Panc1 (cell line): ENCODE measurements at regions of chr11 and their contacts with region 1.

Region 1: GRCh38 chr11:36265793-36266628 is 23.2 kb downstream of the COMMD9 start:
- DNase-seq: no peak
- ATAC-seq: peak; percentile 87
- H3K4me3 ChIP-seq: no peak overlapping the region
- H3K27ac ChIP-seq: no peak overlapping the region
- H3K4me1 ChIP-seq: no peaks in the 10 kb centered on the region
- H3K27me3 ChIP-seq: no peaks in the 10 kb centered on the region
- CTCF ChIP-seq: peak; percentile 90

Region 2: DNA sequence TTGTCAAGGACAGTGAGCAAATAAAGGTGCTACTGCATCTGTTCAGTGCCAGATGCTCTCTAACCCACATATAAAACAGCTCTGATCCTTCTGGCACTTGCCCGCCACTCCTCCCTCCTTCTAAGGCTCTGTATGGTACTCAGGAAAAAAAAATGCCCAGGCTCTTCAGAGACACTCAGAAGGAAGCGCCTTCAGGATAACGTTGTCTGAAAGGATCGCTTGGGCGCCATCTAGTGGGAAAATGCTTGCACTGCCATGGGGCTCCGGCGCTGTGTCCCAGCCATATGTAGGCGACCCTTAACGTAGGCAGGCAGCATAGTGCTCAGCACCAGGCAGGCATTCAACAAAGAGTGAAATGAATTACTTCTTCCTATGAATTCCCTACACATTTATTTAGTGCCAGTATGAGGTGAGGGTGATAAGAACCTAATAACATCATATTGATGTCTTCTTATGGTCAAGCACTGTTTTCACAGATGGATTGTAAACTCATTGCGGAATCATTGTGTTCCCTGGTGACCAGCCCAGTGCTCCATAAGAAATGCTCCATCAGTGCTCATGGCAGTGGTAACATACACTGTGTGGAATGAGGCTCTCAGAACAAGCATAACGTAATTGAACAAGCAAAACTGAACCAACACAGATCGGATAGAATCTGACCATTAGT is 780.2 kb before region 1 on chr11:
- CTCF ChIA-PET with region 1: no interaction called
- POLR2A ChIA-PET with region 1: no interaction called
- in situ Hi-C with region 1: no loop called
- intact Hi-C with region 1: loop called (anchors 5 kb)
- DNase-seq: peak; percentile 48
- ATAC-seq: peak; percentile 99
- H3K4me3 ChIP-seq: no peak overlapping the region
- H3K27ac ChIP-seq: no peak overlapping the region
- H3K4me1 ChIP-seq: no peaks in the 10 kb centered on the region
- H3K27me3 ChIP-seq: peaks cover 19% of the 10 kb centered on the region
- CTCF ChIP-seq: peak; percentile 96

Region 3: DNA sequence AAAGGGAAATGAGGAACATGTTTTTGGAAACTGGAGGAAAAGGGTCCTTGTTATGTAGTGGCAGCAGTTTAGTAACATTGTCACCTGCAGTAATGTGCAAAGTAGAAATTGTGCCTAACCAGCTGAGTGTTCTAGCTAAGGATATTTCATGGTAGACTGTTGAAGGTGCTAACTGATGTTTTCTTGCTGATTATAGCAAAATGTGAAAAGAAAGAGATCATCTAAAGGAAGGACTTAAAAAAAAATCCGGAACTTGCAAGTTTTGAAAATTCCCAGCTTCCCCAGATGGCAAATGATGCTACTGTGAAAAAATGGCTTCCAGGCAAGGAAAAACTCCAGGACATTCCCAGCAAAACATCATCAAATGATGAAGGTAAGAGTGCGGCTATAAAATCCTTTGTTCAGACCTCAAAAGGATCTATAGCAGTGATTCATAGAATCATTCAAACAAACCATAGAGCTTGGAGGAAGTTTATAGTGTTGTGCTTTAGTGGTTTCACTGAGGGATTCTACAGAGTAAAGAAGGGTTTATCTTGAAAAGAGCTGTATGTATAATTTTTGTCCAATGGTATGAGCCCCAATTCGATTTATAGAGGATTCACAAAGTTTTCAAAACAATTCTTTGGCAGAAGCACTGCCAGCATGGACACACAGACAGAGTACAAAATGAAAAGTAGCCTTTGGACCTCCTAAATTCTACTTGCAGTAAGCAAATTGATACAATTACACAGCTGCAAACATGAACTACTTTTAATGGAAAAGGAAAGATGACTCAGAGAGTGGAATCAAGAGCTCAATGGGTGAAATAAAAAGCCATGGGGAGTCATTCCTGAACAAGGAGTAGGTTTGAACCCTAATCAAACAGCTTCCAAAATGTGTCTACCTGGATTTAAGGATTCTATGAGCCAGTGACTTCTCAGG is 607.7 kb before region 1 on chr11:
- CTCF ChIA-PET with region 1: no interaction called
- POLR2A ChIA-PET with region 1: no interaction called
- in situ Hi-C with region 1: no loop called
- intact Hi-C with region 1: no loop called
- DNase-seq: no peak
- ATAC-seq: no peak
- H3K4me3 ChIP-seq: no peak overlapping the region
- H3K27ac ChIP-seq: no peak overlapping the region
- H3K4me1 ChIP-seq: peaks cover 8% of the 10 kb centered on the region
- H3K27me3 ChIP-seq: no peaks in the 10 kb centered on the region
- CTCF ChIP-seq: no peak

Region 4: GRCh38 chr11:36235750-36236149 is 30.3 kb before region 1 on chr11:
- CTCF ChIA-PET with region 1: no interaction called
- POLR2A ChIA-PET with region 1: no interaction called
- in situ Hi-C with region 1: no loop called
- intact Hi-C with region 1: no loop called
- DNase-seq: no peak
- ATAC-seq: no peak
- H3K4me3 ChIP-seq: no peak overlapping the region
- H3K27ac ChIP-seq: no peak overlapping the region
- H3K4me1 ChIP-seq: no peaks in the 10 kb centered on the region
- H3K27me3 ChIP-seq: no peaks in the 10 kb centered on the region
- CTCF ChIP-seq: no peak